Activated CD4-positive, alpha-beta memory T cell treated with anti-CD3 and anti-CD28 coated beads, Interleukin-2, amount 10 ng/mL, durations not matched to agents 7 days and 5 days (primary cell): ENCODE measurements at regions of chr1 and their contacts with region 1.

Region 1: DNA sequence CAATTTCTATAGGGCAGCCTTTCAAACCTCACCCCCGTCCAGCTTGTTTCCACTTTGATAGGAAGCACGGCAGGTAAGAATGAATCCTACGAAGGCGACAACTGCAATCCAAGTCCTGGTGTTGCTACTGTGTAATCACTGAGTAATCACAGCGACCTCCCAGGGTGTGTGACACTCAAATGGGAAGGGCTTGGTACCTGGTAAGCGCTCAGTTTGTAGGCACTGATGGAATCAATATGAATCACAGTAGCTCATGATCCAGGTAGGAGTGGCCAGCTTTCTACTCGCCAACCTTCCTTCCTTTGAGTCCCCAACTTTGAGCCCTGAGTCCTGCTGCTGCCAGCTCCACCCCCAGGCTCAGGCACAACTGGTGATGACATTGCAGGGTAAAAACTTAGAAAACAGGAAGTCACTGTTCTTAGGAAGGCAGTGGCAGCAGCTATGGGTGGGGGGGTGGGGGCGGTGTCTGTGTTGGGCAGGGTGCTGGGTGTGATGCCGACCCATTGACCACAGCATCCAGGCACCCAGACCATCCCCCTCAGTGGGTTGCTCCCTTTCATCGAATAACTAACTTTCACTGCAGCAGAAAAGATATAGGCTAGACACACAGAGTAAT is 70.7 kb downstream of the CD247 start:
- DNase-seq: peak; percentile 84
- H3K4me3 Mint-ChIP-seq: peak overlapping the region; percentile 28
- H3K27ac Mint-ChIP-seq: peak overlapping the region; percentile 97
- H3K4me1 Mint-ChIP-seq: peaks cover 85% of the 10 kb centered on the region
- H3K27me3 Mint-ChIP-seq: no peaks in the 10 kb centered on the region

Region 2: GRCh38 chr1:167082511-167083027 is 365.1 kb before region 1 on chr1:
- CTCF ChIA-PET with region 1: no interaction called
- POLR2A ChIA-PET with region 1: no interaction called
- DNase-seq: no peak
- H3K4me3 Mint-ChIP-seq: no peak overlapping the region
- H3K27ac Mint-ChIP-seq: no peak overlapping the region
- H3K4me1 Mint-ChIP-seq: no peaks in the 10 kb centered on the region
- H3K27me3 Mint-ChIP-seq: peaks cover 9% of the 10 kb centered on the region

Region 3: DNA sequence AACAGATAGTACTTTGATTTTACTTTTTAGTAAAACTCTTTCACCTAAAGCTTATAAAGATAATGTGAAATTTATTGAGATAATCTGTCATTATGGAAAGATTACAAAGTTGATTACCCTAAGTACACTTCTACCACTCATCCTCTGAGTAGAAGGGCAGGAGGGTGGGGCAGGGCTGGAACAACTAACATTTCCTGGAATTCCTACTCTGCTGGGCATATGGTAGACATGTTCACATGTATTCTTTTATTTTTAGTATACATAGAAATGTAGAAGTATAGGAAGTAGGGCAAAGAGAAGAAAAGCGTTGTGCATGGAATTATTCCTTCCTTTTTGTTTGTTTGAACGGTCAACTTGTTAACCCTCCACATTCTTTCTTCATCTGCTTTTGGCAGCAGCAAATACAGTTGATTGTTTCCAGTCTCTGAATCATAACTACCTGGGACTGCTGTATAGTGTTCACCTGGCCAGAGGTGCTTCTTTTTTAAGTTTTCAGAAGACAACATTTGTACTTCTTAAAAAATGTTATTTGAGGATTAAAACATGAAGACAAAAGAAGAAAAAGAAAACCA is 141.8 kb before region 1 on chr1:
- CTCF ChIA-PET with region 1: no interaction called
- POLR2A ChIA-PET with region 1: no interaction called
- DNase-seq: no peak
- H3K4me3 Mint-ChIP-seq: no peak overlapping the region
- H3K27ac Mint-ChIP-seq: no peak overlapping the region
- H3K4me1 Mint-ChIP-seq: peaks cover 4% of the 10 kb centered on the region
- H3K27me3 Mint-ChIP-seq: no peaks in the 10 kb centered on the region

Region 4: GRCh38 chr1:167482184-167482583 is 34.6 kb after region 1 on chr1:
- CTCF ChIA-PET with region 1: interaction called, 5 read pairs
- POLR2A ChIA-PET with region 1: interaction called, 50 read pairs
- DNase-seq: peak; percentile 61
- H3K4me3 Mint-ChIP-seq: no peak overlapping the region
- H3K27ac Mint-ChIP-seq: peak overlapping the region; percentile 87
- H3K4me1 Mint-ChIP-seq: peaks cover 92% of the 10 kb centered on the region
- H3K27me3 Mint-ChIP-seq: no peaks in the 10 kb centered on the region